HepG2 (cell line): ENCODE measurements at regions of chr14 and their contacts with region 1.

Region 1: GRCh38 chr14:54440873-54441868 is at the start of gene CNIH1:
- DNase-seq: peak; percentile 84
- ATAC-seq: peak; percentile 97
- H3K4me3 ChIP-seq: peak within 1 kb of the TSS; percentile 82 to 87 (median 86)
- H3K27ac ChIP-seq: peak within 1 kb of the TSS; percentile 96
- H3K4me1 ChIP-seq: peaks cover 53% of the 10 kb centered on the region
- H3K27me3 ChIP-seq: no peaks in the 10 kb centered on the region; a peak in 1 of 5 replicates
- CTCF ChIP-seq: peak; percentile 83
- EP300 ChIP-seq: peak in 1 of 2 experiments; percentile 3; a peak in 1 of 4 replicates
- POLR2A ChIP-seq: peak; percentile 82 to 86
- RAD21 ChIP-seq: no peak; the same call in none of the 2 replicates
- total RNA-seq, gene CNIH1: 141 and 166 TPM in 2 replicates

Region 2: DNA sequence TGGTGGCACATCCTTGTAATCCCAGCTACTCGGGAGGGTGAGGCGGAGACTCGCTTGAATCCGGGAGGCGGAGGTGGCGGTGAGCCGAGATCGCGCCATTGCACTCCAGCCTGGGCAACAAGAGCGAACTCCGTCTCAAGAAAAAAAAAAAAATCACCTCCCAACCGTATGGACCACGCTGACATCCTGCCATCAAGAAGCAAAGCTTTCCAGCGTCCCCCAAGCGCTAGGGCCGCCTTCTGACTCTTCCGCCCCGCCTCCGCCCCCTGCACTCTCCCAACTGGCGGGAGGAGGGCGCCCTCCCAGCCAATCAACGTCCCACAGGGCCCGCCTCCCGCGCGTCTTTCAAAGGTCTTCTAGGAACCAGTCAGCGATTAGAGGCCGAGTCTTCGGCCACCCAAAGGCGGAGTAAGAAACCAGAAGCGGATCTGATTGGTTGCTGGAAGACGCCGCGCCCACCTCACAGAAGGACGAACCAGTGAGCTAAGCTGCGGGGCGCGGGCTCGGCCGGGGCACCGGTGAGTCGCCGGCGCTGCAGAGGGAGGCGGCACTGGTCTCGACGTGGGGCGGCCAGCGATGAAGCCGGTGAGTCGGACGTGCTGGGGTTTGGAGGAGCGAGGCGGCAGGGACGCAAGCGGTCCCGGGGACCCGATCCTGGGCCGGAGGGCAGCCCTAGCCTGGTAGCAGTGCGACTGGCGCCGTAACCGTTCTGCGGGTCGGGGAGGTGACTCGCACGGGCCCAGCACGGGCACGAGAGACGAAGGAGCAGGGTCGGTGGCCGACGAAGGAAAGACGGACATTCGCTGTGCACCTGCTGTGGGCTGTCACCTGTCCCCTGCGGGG is 44.5 kb before region 1 on chr14 and contains the start of gene CDKN3:
- CTCF ChIA-PET with region 1: no interaction called
- POLR2A ChIA-PET with region 1: no interaction called
- in situ Hi-C with region 1: no loop called
- intact Hi-C with region 1: loop called (anchors 2 kb)
- DNase-seq: peak; percentile 98
- ATAC-seq: peak; percentile 97
- H3K4me3 ChIP-seq: peak within 1 kb of the TSS; percentile 72 to 98 (median 89)
- H3K27ac ChIP-seq: peak within 1 kb of the TSS; percentile 76
- H3K4me1 ChIP-seq: peaks cover 33% of the 10 kb centered on the region
- H3K27me3 ChIP-seq: no peaks in the 10 kb centered on the region; a peak in 1 of 5 replicates
- CTCF ChIP-seq: peak; percentile 74
- EP300 ChIP-seq: no peak
- POLR2A ChIP-seq: peak; percentile 91 to 95
- RAD21 ChIP-seq: peak; percentile 39; the same call in 1 of the 2 replicates
- total RNA-seq, gene CDKN3: 88.9 and 111 TPM in 2 replicates

Region 3: GRCh38 chr14:54566410-54567223 is 125.4 kb after region 1 on chr14 and contains the start of gene SAMD4A:
- CTCF ChIA-PET with region 1: no interaction called
- POLR2A ChIA-PET with region 1: no interaction called
- in situ Hi-C with region 1: no loop called
- intact Hi-C with region 1: no loop called
- DNase-seq: peak; percentile 48
- ATAC-seq: peak; percentile 19
- H3K4me3 ChIP-seq: peak within 1 kb of the TSS; percentile 73 to 93 (median 89)
- H3K27ac ChIP-seq: peak within 1 kb of the TSS; percentile 97
- H3K4me1 ChIP-seq: peaks cover 35% of the 10 kb centered on the region
- H3K27me3 ChIP-seq: no peaks in the 10 kb centered on the region
- CTCF ChIP-seq: no peak; the same call in none of the 2 replicates
- EP300 ChIP-seq: no peak
- POLR2A ChIP-seq: no peak; a peak in 1 of 4 replicates
- RAD21 ChIP-seq: no peak
- total RNA-seq, gene SAMD4A: 6.9 and 13.0 TPM in 2 replicates